Caki2 (cell line): ENCODE measurements at regions of chr22 and their contacts with region 1.

Region 1: DNA sequence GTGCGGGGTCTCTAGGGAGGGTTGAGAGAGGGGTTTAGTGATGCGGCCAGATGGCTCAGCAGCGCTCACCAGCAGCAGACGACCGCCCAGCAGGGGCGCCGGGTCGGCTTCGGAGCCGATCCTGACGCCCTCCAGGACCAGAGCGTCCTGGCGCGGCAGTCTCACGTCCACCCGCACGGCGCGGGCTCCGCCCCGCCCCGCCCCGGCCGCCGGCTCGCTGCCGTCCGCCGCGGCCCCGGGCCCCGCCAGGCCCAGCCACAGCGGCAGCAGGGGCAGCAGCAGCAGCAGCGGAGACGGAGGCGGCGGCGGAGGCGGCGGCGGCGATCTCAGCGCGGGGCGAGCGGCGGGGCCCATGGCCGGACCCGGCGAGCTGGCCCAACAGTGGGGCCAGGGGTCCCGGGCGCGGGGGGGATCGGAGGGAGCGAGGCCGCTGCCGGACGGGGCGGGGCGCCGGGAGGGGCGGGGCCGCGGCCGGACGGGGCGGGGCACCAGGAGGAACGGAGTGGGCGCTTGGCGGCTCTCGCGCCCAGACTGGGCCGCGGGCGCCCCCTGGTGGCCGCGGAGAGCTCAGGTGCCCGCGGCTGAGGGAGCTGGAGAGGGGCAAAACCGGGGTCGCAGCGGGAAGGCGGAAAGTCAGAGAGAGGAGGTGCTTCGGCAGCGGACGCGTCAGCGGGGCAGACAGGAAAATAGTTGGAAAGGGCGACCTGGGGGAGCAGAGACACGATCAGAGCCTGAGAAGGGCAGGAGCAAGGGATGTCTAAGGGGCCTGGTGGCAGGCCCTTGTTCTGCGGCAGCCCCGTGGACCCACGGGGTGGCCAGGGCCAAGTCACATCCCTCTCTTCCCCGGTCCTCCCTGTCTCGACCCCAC is at the start of gene RNF215:
- DNase-seq: peak; percentile 75
- total RNA-seq, gene RNF215: 53.2 and 91.7 TPM in 2 replicates

Region 2: GRCh38 chr22:30289134-30289979 is 97.8 kb before region 1 on chr22 and contains the start of gene CASTOR1:
- in situ Hi-C with region 1: loop called (anchors 10 kb)
- DNase-seq: peak; percentile 98
- total RNA-seq, gene CASTOR1: 14.0 and 16.0 TPM in 2 replicates